Activated naive CD4-positive, alpha-beta T cell treated with anti-CD3 and anti-CD28 coated beads for 36 hours (primary cell): ENCODE measurements at regions of chr10 and their contacts with region 1.

Region 1: DNA sequence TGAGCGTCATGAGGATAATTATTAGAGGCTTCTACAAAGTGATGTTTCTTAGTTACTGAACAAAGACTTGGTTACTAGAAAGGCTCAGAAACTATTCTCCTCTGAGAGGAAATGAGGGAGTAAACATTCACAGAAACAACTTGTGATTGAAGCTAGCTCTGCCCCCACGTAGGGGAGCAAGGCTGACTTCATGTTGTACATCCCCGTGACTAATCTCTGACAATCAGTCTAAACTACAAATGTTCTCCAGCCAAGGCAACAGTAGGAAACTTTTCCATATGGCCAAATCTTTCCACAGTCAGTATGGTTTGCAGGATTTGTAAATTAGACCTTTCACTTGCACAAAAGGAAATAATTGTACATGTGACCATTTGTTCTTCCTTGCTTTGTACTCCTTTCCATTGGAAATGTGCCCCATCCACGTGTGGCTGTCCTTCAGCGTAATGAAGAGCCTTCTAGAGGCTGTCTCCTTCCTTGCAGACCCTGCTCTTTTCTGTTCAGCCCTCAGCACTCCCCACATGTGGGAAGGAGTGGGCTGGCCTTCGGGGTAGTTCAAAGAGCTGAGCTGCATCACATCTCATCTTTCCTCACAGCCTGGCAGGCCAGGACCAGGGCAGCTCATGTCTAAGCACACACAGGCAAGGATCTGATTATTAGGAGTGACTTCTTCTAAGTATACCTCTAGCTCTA is 93.5 kb downstream of the PCGF5 start:
- DNase-seq: peak; percentile 50
- H3K4me3 Mint-ChIP-seq: no peak overlapping the region
- H3K27ac Mint-ChIP-seq: peak overlapping the region; percentile 82
- H3K4me1 Mint-ChIP-seq: peaks cover 11% of the 10 kb centered on the region
- H3K27me3 Mint-ChIP-seq: peaks cover 4% of the 10 kb centered on the region

Region 2: GRCh38 chr10:91220194-91220953 is 93.6 kb before region 1 on chr10 and contains the start of gene PCGF5:
- CTCF ChIA-PET with region 1: no interaction called
- intact Hi-C with region 1: no loop called
- DNase-seq: peak; percentile 89
- H3K4me3 Mint-ChIP-seq: peak within 1 kb of the TSS; percentile 80
- H3K27ac Mint-ChIP-seq: peak within 1 kb of the TSS; percentile 22
- H3K4me1 Mint-ChIP-seq: peaks cover 33% of the 10 kb centered on the region
- H3K27me3 Mint-ChIP-seq: no peaks in the 10 kb centered on the region
- total RNA-seq, gene PCGF5: 34.2 to 36.4 TPM

Region 3: GRCh38 chr10:91350651-91351081 is 36.7 kb after region 1 on chr10:
- CTCF ChIA-PET with region 1: no interaction called
- intact Hi-C with region 1: loop called (anchors 5 kb)
- DNase-seq: no peak
- H3K4me3 Mint-ChIP-seq: no peak overlapping the region
- H3K27ac Mint-ChIP-seq: no peak overlapping the region
- H3K4me1 Mint-ChIP-seq: peaks cover 3% of the 10 kb centered on the region
- H3K27me3 Mint-ChIP-seq: peaks cover 5% of the 10 kb centered on the region

Region 4: GRCh38 chr10:91367127-91367531 is 53.2 kb after region 1 on chr10:
- CTCF ChIA-PET with region 1: no interaction called
- intact Hi-C with region 1: loop called (anchors 1 kb)
- DNase-seq: peak; percentile 30
- H3K4me3 Mint-ChIP-seq: no peak overlapping the region
- H3K27ac Mint-ChIP-seq: no peak overlapping the region
- H3K4me1 Mint-ChIP-seq: peaks cover 11% of the 10 kb centered on the region
- H3K27me3 Mint-ChIP-seq: peaks cover 34% of the 10 kb centered on the region